Prostate gland (tissue), 2 donors: ENCODE measurements at regions of chr4 and their contacts with region 1.

Region 1: GRCh38 chr4:41207305-41207831 is 7.0 kb downstream of the APBB2 start:
- DNase-seq: no peak
- H3K4me3 ChIP-seq: no peak overlapping the region
- H3K27ac ChIP-seq: no peak overlapping the region
- H3K4me1 ChIP-seq: no peaks in the 10 kb centered on the region
- H3K27me3 ChIP-seq: no peaks in the 10 kb centered on the region
- CTCF ChIP-seq: no peak
- POLR2A ChIP-seq: no peak

Region 2: DNA sequence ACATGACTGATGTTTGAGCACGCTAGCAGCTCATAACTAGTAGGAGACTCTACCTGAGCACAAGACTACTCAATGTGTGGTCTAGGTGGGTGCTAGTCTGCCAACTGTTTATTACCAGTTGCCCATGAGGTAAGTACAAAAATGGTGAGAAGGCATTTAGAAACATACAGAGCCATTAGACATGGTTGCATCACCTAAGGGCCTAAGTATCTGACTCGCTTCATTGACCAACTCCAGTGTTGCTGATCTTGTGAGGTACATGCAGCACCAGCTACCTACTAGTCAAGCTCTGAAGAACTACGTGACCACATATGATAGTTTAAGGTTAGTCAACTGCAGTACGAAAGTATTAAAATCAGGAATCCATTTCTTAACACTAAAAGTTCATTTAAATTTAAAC is 32.9 kb before region 1 on chr4:
- intact Hi-C with region 1: loop called (anchors 5 kb)
- DNase-seq: no peak
- H3K4me3 ChIP-seq: no peak overlapping the region
- H3K27ac ChIP-seq: no peak overlapping the region
- H3K4me1 ChIP-seq: no peaks in the 10 kb centered on the region
- H3K27me3 ChIP-seq: no peaks in the 10 kb centered on the region
- CTCF ChIP-seq: no peak
- POLR2A ChIP-seq: no peak